ENCODE measurements at regions of chr10 and their contacts with region 1.

Region 1: GRCh38 chr10:69914398-69915214 is 112.9 kb downstream of the COL13A1 start:
- DNase-seq: peak; percentile 66
- H3K4me3 Mint-ChIP-seq: no peak overlapping the region
- H3K27ac Mint-ChIP-seq: no peak overlapping the region
- H3K4me1 Mint-ChIP-seq: no peaks in the 10 kb centered on the region
- H3K27me3 Mint-ChIP-seq: no peaks in the 10 kb centered on the region
- CTCF ChIP-seq: peak; percentile 96

Region 2: DNA sequence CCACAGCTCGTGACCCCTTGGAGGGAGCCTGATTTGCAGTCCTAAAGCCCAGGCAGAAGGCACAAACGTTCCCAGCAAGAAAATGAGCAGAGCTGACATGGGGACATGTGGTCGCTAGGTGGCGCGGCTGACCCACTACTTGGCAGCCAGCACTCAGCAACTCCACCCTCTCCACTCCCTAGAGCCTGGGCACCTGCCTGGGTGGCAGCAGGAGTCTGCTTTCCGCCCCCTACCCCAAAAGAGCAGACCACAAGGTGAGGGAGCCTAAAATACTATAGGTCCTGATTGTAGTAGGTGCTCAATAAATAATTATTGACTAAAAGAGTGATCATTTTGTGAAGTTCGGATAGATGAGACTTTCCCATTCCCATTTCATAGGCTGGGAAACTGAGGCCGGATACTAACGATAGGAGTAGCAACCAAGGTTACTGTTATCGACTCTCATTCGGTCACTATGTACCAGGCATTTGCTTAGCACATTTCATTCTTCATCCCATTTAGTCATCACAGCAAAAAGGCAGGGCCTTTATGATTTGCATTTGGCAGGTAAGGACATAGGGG is 398.8 kb before region 1 on chr10:
- CTCF ChIA-PET with region 1: interaction called, 14 read pairs
- POLR2A ChIA-PET with region 1: no interaction called
- intact Hi-C with region 1: loop called (anchors 5 kb)
- DNase-seq: peak; percentile 77
- H3K4me3 Mint-ChIP-seq: no peak overlapping the region
- H3K27ac Mint-ChIP-seq: no peak overlapping the region
- H3K4me1 Mint-ChIP-seq: no peaks in the 10 kb centered on the region
- H3K27me3 Mint-ChIP-seq: peaks cover 28% of the 10 kb centered on the region
- CTCF ChIP-seq: peak; percentile 90

Region 3: DNA sequence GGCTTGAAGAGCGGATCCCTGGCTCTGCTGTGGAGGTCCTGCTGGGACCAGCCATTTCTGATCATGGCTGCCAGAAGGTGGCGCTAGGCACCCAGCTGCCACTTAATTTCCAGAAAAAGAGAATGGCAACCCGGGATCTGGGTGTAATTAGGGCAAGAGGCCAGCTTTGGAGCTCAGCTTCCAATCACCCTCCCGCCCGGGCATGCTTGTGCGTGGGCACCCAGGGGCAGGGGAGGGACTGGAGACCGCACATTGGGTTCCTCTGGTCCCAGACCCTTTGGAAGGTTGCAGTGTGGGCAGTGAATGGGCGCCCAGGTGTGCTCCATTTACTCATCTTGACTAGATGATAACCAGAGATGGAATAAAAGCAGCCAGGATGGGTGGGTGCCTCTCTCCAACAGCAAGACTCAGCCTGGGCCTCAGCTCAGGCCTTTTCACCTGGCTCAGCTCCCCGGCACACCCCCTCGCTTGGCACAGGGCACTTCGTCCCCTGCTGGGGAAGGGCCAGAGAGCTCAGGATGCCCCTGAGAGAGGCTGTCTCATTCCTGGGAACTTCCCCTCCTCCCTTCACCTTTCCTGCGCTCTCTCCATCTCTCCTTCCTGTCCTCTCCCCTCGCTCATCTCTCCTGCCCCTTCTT is 269.8 kb before region 1 on chr10:
- CTCF ChIA-PET with region 1: interaction called, 35 read pairs
- POLR2A ChIA-PET with region 1: no interaction called
- intact Hi-C with region 1: loop called (anchors 1 kb)
- DNase-seq: peak; percentile 73
- H3K4me3 Mint-ChIP-seq: no peak overlapping the region
- H3K27ac Mint-ChIP-seq: no peak overlapping the region
- H3K4me1 Mint-ChIP-seq: peaks cover 15% of the 10 kb centered on the region
- H3K27me3 Mint-ChIP-seq: no peaks in the 10 kb centered on the region
- CTCF ChIP-seq: peak; percentile 88

Region 4: GRCh38 chr10:69786791-69787190 is 127.8 kb before region 1 on chr10:
- CTCF ChIA-PET with region 1: interaction called, 75 read pairs
- POLR2A ChIA-PET with region 1: no interaction called
- intact Hi-C with region 1: loop called (anchors 1 kb)
- DNase-seq: peak; percentile 41
- H3K4me3 Mint-ChIP-seq: no peak overlapping the region
- H3K27ac Mint-ChIP-seq: no peak overlapping the region
- H3K4me1 Mint-ChIP-seq: no peaks in the 10 kb centered on the region
- H3K27me3 Mint-ChIP-seq: peaks cover 23% of the 10 kb centered on the region
- CTCF ChIP-seq: peak; percentile 30

Region 5: DNA sequence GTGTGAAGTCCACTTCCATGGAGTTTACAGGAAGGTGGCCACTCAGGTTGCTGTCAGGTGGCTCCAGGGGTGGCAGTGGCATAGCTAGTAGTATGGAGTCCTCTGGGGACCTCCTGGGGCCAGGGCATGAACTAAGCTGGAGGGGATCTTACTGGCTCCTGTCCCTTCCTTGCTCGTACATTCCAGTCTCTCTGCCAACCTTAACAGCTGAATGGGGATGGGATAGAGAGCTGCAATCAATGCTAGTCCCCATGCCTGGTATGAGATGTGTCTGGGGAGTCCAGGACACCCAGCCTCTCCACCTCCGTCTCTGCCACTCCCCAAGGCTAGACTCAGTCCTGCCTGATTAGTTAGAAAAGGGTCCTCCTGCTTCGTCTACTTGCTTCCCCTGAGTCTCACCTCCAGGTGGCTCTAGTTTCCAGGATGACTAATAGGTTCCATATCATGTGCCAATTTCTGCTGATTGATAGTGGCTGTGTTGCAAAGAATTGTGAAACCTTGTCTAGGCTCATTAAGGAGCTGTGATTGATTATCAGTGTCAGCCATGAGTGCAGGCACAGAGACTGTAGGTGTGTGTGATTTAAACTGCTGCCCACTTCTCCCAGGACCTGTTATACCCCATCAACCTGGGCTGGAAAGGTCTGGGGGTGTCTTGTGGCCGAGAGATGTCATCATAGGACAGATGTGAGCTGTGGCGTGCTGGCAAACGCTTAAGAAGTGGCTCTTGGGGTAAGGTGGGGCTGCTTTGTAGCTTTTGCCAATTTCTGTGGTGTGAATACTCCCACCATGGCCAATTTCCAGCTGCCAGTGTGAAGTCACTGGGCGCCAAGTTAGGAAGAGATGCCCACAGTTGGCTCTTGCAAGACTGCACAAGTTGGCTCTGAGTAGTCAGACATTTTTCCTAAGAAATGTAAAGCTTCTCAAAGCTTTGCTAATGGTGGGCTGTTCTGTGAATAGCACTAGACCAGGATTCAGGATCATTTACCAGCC is 53.1 kb before region 1 on chr10:
- CTCF ChIA-PET with region 1: interaction called, 14 read pairs
- POLR2A ChIA-PET with region 1: interaction called, 3 read pairs
- intact Hi-C with region 1: loop called (anchors 1 kb)
- DNase-seq: peak; percentile 94
- H3K4me3 Mint-ChIP-seq: no peak overlapping the region
- H3K27ac Mint-ChIP-seq: peak overlapping the region; percentile 29
- H3K4me1 Mint-ChIP-seq: peaks cover 15% of the 10 kb centered on the region
- H3K27me3 Mint-ChIP-seq: no peaks in the 10 kb centered on the region
- CTCF ChIP-seq: peak; percentile 14

Region 6: GRCh38 chr10:69901628-69902505 is 12.7 kb before region 1 on chr10:
- CTCF ChIA-PET with region 1: interaction called, 24 read pairs
- POLR2A ChIA-PET with region 1: no interaction called
- intact Hi-C with region 1: no loop called
- DNase-seq: peak; percentile 40
- H3K4me3 Mint-ChIP-seq: no peak overlapping the region
- H3K27ac Mint-ChIP-seq: no peak overlapping the region
- H3K4me1 Mint-ChIP-seq: no peaks in the 10 kb centered on the region
- H3K27me3 Mint-ChIP-seq: no peaks in the 10 kb centered on the region
- CTCF ChIP-seq: peak; percentile 58

Region 7: DNA sequence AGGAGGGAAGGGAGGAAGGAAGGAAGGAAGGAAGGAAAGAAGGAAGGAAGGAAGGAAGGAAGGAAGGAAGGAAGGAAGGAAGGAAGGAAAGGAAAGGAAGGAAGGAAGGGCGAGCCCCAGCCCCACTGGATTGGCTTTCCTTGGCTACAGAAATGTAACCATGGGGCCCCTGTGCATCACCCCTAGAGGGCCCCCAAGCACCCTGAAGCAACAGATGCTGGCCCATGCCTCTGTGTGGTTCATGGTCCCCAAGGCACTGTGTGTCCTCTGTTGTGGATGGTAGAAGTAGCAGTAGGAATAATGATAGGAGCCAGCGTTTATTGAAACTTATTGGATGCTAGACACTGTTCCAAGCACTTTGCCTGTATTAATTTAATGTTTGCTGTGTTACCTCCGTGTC is 21.5 kb after region 1 on chr10:
- CTCF ChIA-PET with region 1: interaction called, 12 read pairs
- POLR2A ChIA-PET with region 1: no interaction called
- intact Hi-C with region 1: no loop called
- DNase-seq: no peak
- H3K4me3 Mint-ChIP-seq: no peak overlapping the region
- H3K27ac Mint-ChIP-seq: no peak overlapping the region
- H3K4me1 Mint-ChIP-seq: no peaks in the 10 kb centered on the region
- H3K27me3 Mint-ChIP-seq: peaks cover 12% of the 10 kb centered on the region
- CTCF ChIP-seq: no peak